ENCODE measurements at regions of chr1 and their contacts with region 1.

Region 1: GRCh38 chr1:28078680-28079626 is 9.5 kb downstream of the EYA3 start:
- DNase-seq: no peak
- ATAC-seq: peak; percentile 81
- H3K4me3 ChIP-seq: no peak overlapping the region
- H3K27ac ChIP-seq: no peak overlapping the region
- H3K4me1 ChIP-seq: peaks cover 8% of the 10 kb centered on the region
- H3K27me3 ChIP-seq: no peaks in the 10 kb centered on the region
- CTCF ChIP-seq: no peak

Region 2: GRCh38 chr1:28456078-28456477 is 377.1 kb after region 1 on chr1:
- CTCF ChIA-PET with region 1: no interaction called
- POLR2A ChIA-PET with region 1: interaction called, 12 read pairs
- in situ Hi-C with region 1: no loop called
- intact Hi-C with region 1: no loop called
- DNase-seq: no peak
- ATAC-seq: peak; percentile 42; the same call in 1 of the 2 replicates
- H3K4me3 ChIP-seq: no peak overlapping the region
- H3K27ac ChIP-seq: no peak overlapping the region
- H3K4me1 ChIP-seq: no peaks in the 10 kb centered on the region
- H3K27me3 ChIP-seq: no peaks in the 10 kb centered on the region
- CTCF ChIP-seq: no peak

Measured in Panc1 (cell line).